Heart left ventricle (tissue), 16 donors: ENCODE measurements at regions of chr19 and their contacts with region 1.

Region 1: GRCh38 chr19:16542045-16542909 is at the start of gene CHERP:
- DNase-seq: peak; percentile 95 to 97 (median 96)
- ATAC-seq: peak; percentile 89 to 98 (median 97)
- H3K4me3 ChIP-seq: peak within 1 kb of the TSS; percentile 71 to 100 (median 94)
- H3K27ac ChIP-seq: peak within 1 kb of the TSS; percentile 47 to 95 (median 92)
- H3K4me1 ChIP-seq: peaks cover 6 to 56% (median 33%) of the 10 kb centered on the region in 12 donors
- H3K27me3 ChIP-seq: no peaks in the 10 kb centered on the region
- CTCF ChIP-seq: peak in 1 of 12 donors; percentile 15
- POLR2A ChIP-seq: peak in 1 of 2 donors; percentile 85
- total RNA-seq, gene CHERP: 5.7 to 24.6 (median 17.0) TPM

Region 2: DNA sequence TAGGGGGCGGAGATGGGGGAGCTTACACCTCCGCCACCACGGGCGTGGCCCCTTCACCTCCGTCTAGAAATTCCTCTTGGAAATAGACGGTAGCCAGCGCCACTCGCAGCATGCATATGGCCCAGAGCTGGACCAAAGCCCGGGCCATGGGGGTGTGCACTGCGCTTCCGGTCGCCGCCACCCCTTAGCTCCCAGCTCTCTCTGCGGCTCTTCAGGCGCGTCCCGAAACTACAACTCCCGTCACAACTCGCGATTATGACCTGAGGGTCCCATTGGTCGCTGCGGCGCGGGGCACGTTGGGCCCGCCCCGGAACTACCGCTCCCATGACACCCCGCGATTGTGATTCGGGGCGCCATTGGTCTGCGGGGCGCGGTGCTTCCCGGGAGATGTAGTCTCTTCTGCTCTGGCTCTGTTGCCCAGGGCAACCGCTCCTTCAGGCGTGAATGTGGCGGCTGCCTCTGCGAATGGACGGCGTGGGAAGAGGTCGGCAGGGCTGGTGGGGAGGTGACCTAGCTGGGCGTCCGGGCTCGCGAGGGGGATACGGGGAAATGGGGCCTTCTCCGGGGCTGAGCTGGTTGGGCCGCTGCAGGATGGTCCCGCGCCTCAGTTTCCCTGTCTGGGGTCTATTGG is 46.2 kb before region 1 on chr19 and contains the starts of genes C19orf44 and CALR3:
- intact Hi-C with region 1: loop called in 2 of 10 experiments (anchors 2 to 5 kb)
- DNase-seq: peak; percentile 99 to 100 (median 99)
- ATAC-seq: peak; percentile 98 to 99 (median 99)
- H3K4me3 ChIP-seq: peak within 1 kb of the TSS; percentile 53 to 85 (median 72)
- H3K27ac ChIP-seq: peak within 1 kb of the TSS in 11 of 12 donors; percentile 54 to 83 (median 81)
- H3K4me1 ChIP-seq: peaks cover 0 to 18% (median 5%) of the 10 kb centered on the region in 12 donors
- H3K27me3 ChIP-seq: no peaks in the 10 kb centered on the region
- CTCF ChIP-seq: peak in 6 of 12 donors; percentile 14 to 52 (median 40)
- POLR2A ChIP-seq: peak in 1 of 2 donors; percentile 59
- total RNA-seq, gene C19orf44: 1.6 to 4.8 (median 3.3) TPM
- total RNA-seq, gene CALR3: not detected

Region 3: DNA sequence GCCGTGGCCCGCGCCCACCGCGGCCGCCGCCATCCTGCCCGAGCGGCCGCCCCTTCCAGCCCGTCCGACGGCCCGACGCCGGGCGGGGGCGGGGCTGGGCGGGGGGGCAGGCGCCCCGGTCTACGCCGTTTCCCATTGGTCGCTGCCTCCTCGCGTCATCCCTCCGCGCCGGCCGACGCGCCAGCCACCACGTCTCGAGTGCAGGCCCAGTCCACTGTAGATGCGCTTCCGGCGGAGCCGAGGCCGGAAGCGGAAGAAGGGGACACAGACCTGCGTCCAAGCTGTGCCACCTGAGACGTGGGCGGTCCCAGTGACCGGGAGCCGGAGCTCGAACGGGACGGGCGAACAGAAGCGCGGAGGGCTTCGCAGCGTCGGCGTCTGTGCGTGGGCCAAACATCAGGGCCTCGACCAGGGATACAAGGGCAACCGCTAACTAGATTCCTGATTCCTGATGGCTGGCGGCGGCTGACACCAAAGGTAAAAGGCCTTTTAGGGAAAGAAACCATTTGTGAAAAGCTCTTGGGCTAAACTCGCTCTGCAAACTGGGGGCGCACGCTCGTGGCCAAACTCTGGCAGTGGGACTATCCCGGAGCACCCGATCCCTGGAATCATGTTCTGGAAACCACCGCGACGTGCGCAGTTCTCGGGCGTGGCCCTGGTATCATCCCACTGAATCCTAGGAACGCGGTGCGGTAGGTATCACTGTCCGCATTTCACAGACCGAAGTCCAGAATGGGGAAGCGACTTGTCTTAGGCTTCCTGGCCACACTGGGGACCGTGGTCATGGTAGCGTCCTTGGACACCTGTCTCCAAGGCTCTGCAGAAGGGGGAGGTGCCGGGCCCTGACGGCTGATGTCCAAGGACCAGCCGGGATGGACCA is 30.3 kb after region 1 on chr19 and contains the start of gene SLC35E1:
- intact Hi-C with region 1: loop called in 2 of 10 experiments (anchors 1 to 2 kb)
- DNase-seq: peak; percentile 94 to 98 (median 97)
- ATAC-seq: peak; percentile 96 to 99 (median 98)
- H3K4me3 ChIP-seq: peak within 1 kb of the TSS; percentile 69 to 98 (median 85)
- H3K27ac ChIP-seq: peak within 1 kb of the TSS; percentile 35 to 93 (median 86)
- H3K4me1 ChIP-seq: peaks cover 7 to 54% (median 27%) of the 10 kb centered on the region in 12 donors
- H3K27me3 ChIP-seq: no peaks in the 10 kb centered on the region
- CTCF ChIP-seq: no peak
- POLR2A ChIP-seq: peak in 1 of 2 donors; percentile 70
- total RNA-seq, gene SLC35E1: 20.4 to 44.0 (median 24.0) TPM

Region 4: DNA sequence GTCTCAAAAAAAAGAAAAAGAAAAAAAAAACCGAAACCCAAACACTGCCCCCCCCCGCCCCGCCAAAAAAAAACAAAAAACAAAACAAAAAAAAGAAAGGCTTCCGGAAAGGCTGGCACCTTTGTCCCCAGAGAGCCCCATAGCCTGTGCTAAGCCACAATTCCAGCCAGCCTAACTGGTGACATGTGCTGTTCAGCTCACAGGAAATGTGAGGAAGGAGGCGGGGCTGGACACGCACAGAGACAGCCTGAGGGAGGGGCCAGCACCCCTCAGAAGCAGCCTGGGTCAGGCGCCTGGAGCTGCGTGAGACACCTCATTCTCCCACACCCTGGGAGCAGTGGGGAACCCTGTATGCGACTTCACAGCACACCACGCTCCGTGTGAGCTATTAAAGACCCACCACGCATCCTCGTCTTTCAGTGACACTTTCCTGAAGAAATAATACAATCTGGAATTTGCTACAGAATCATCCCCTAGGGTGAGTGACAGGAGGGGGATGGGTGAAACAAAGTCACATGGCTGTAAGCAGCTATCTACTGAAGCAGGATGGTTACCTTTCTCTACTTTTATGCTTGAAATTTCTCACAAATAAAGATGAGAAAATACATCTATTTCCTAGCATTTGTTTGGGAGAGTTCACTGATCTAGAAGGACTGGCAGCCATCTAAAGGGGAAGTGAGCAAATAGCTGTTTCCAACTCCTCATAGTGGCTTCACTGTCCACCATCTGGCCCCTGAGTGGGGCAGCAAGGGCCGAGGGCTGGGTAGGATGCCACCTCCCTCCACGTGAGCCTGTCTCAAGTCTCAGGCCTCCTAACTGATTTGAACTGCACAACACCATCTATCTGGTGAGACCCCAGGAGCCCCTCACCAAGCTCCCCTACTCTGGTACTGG is 42.2 kb after region 1 on chr19:
- intact Hi-C with region 1: loop called in 1 of 10 experiments (anchors 5 kb)
- DNase-seq: peak; percentile 84 to 89 (median 88)
- ATAC-seq: peak; percentile 62 to 86 (median 70)
- H3K4me3 ChIP-seq: peak overlapping the region in 8 of 12 donors; percentile 7 to 56 (median 16)
- H3K27ac ChIP-seq: peak overlapping the region in 11 of 12 donors; percentile 7 to 87 (median 55)
- H3K4me1 ChIP-seq: peaks cover 21 to 99% (median 87%) of the 10 kb centered on the region in 12 donors
- H3K27me3 ChIP-seq: no peaks in the 10 kb centered on the region
- CTCF ChIP-seq: no peak
- POLR2A ChIP-seq: no peak

Region 5: GRCh38 chr19:16628183-16628983 is 86.1 kb after region 1 on chr19 and contains the start of gene MED26:
- intact Hi-C with region 1: loop called in 1 of 10 experiments (anchors 2 kb)
- DNase-seq: peak; percentile 96 to 98 (median 96)
- ATAC-seq: peak; percentile 93 to 98 (median 95)
- H3K4me3 ChIP-seq: peak within 1 kb of the TSS; percentile 75 to 99 (median 90)
- H3K27ac ChIP-seq: peak within 1 kb of the TSS; percentile 92 to 99 (median 98)
- H3K4me1 ChIP-seq: peaks cover 4 to 59% (median 38%) of the 10 kb centered on the region in 12 donors
- H3K27me3 ChIP-seq: no peaks in the 10 kb centered on the region
- CTCF ChIP-seq: peak in 5 of 12 donors; percentile 6 to 36 (median 26)
- POLR2A ChIP-seq: peak; percentile 18 to 83
- total RNA-seq, gene MED26: 3.6 to 7.5 (median 4.6) TPM